Activated CD4-positive, alpha-beta T cell treated with anti-CD3 and anti-CD28 coated beads for 36 hours (primary cell): ENCODE measurements at regions of chr2 and their contacts with region 1.

Region 1: GRCh38 chr2:20661067-20661980 is 5.6 kb upstream of the GDF7 start:
- DNase-seq: peak; percentile 77
- ATAC-seq: peak; percentile 79
- H3K4me3 Mint-ChIP-seq: no peak overlapping the region
- H3K27ac Mint-ChIP-seq: no peak overlapping the region
- H3K4me1 Mint-ChIP-seq: peaks cover 6% of the 10 kb centered on the region
- H3K27me3 Mint-ChIP-seq: peaks cover 42% of the 10 kb centered on the region

Region 2: GRCh38 chr2:20650880-20651730 is 10.2 kb before region 1 on chr2 and contains the start of gene HS1BP3:
- CTCF ChIA-PET with region 1: interaction called, 36 read pairs
- POLR2A ChIA-PET with region 1: no interaction called
- intact Hi-C with region 1: loop called in 1 of 2 experiments (anchors 2 kb)
- DNase-seq: peak; percentile 92
- ATAC-seq: peak; percentile 97
- H3K4me3 Mint-ChIP-seq: peak within 1 kb of the TSS; percentile 78
- H3K27ac Mint-ChIP-seq: peak within 1 kb of the TSS; percentile 86
- H3K4me1 Mint-ChIP-seq: peaks cover 22% of the 10 kb centered on the region
- H3K27me3 Mint-ChIP-seq: no peaks in the 10 kb centered on the region
- total RNA-seq, gene HS1BP3: 6.2 to 7.1 TPM

Region 3: GRCh38 chr2:20781656-20782265 is 120.4 kb after region 1 on chr2:
- CTCF ChIA-PET with region 1: interaction called, 7 read pairs
- POLR2A ChIA-PET with region 1: no interaction called
- intact Hi-C with region 1: loop called in 1 of 2 experiments (anchors 5 kb)
- DNase-seq: peak; percentile 27
- ATAC-seq: peak; percentile 23
- H3K4me3 Mint-ChIP-seq: no peak overlapping the region
- H3K27ac Mint-ChIP-seq: no peak overlapping the region
- H3K4me1 Mint-ChIP-seq: no peaks in the 10 kb centered on the region
- H3K27me3 Mint-ChIP-seq: no peaks in the 10 kb centered on the region

Region 4: GRCh38 chr2:20868377-20868776 is 207.1 kb after region 1 on chr2:
- CTCF ChIA-PET with region 1: interaction called, 4 read pairs
- POLR2A ChIA-PET with region 1: no interaction called
- intact Hi-C with region 1: loop called in 1 of 2 experiments (anchors 5 kb)
- DNase-seq: peak; percentile 89
- ATAC-seq: peak; percentile 99
- H3K4me3 Mint-ChIP-seq: no peak overlapping the region
- H3K27ac Mint-ChIP-seq: no peak overlapping the region
- H3K4me1 Mint-ChIP-seq: peaks cover 11% of the 10 kb centered on the region
- H3K27me3 Mint-ChIP-seq: peaks cover 41% of the 10 kb centered on the region

Region 5: DNA sequence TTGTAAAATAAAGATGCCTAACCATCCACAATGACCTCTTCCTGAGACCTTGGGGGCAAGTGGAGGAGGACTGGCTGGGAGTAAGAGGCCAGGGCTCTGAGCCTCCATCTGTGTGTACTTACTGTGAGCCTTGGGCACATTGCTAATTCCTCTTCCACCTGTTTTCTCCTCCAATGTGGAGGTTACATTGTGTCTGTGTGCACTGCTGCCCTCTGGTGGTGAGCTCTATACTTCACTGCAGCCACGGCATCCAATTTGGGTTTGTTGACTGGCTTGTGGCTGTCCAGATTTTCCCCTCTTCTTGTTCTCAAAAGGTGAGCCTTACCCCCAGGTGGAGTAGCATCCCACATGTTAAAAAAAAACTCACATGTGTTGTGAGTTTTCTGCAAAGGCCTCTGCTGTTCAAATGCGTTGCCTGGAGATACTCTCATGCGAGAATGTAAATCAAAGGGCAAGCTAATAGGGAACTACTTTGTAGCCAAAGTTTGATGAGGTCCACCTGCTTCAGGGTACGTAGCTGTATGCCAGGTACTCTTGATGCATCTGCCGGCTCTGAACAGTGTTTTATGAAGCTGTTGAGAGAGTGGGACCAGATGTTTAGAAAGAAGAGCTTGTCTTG is 301.7 kb after region 1 on chr2:
- CTCF ChIA-PET with region 1: interaction called, 100 read pairs
- POLR2A ChIA-PET with region 1: interaction called, 9 read pairs
- intact Hi-C with region 1: loop called (anchors 1 kb)
- DNase-seq: peak; percentile 84
- ATAC-seq: peak; percentile 68
- H3K4me3 Mint-ChIP-seq: no peak overlapping the region
- H3K27ac Mint-ChIP-seq: no peak overlapping the region
- H3K4me1 Mint-ChIP-seq: no peaks in the 10 kb centered on the region
- H3K27me3 Mint-ChIP-seq: peaks cover 11% of the 10 kb centered on the region

Region 6: GRCh38 chr2:21317131-21317530 is 655.8 kb after region 1 on chr2:
- CTCF ChIA-PET with region 1: interaction called, 4 read pairs
- POLR2A ChIA-PET with region 1: no interaction called
- intact Hi-C with region 1: loop called in 1 of 2 experiments (anchors 5 kb)
- DNase-seq: peak; percentile 55
- ATAC-seq: no peak
- H3K4me3 Mint-ChIP-seq: no peak overlapping the region
- H3K27ac Mint-ChIP-seq: no peak overlapping the region
- H3K4me1 Mint-ChIP-seq: no peaks in the 10 kb centered on the region
- H3K27me3 Mint-ChIP-seq: no peaks in the 10 kb centered on the region